PC-9 (cell line): ENCODE measurements at regions of chr17 and their contacts with region 1.

Region 1: DNA sequence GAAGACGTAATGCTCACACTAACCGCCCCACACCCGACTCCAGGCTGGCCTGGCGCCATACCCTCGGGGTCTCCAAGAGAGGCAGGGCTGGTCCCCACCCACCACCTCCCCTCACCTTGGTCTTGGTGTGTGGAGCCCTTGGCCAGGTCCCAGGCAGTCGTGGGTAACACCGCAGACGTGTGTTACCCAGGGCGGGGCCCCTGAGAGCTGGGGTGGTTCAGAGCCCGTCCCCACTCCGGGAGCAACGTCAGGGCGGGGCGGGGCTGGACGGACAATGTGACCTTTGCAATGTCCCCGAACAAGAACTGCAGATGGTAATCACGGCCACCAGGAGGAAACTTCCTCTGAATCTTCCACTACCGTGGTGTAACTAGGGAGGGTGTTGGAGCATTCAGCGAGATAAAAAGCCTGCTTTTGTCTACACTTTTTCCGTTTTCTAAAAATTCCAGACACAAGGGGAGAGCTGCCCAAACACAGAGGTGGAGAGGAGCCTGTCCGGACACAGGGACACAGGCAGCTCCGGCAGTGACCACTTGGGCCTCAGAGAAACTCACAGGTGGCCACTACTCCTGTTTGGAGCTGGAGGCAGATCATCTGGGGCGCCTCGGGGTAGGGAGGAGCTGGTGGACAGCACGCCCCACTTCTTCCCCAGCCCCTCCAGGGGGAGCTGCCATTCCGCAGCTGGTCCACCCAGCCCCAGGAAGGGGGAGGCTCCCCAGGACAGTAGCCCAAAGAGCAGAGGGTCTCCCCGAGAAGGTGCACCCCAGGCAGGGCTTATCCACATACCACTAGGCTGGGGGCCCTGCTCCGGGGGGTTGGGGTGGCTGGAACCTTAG is 14.2 kb upstream of the SLC38A10 start:
- DNase-seq: peak; percentile 76 to 92
- H3K4me3 ChIP-seq: peak overlapping the region; percentile 39; the same call in 1 of the 2 replicates
- H3K27ac ChIP-seq: peak overlapping the region; percentile 38; the same call in 1 of the 2 replicates
- H3K4me1 ChIP-seq: peaks cover 11% of the 10 kb centered on the region
- H3K27me3 ChIP-seq: no peaks in the 10 kb centered on the region
- CTCF ChIP-seq: peak; percentile 66

Region 2: GRCh38 chr17:81119223-81120148 is 189.8 kb before region 1 on chr17:
- CTCF ChIA-PET with region 1: no interaction called
- POLR2A ChIA-PET with region 1: no interaction called
- intact Hi-C with region 1: no loop called
- DNase-seq: peak; percentile 63 to 75
- H3K4me3 ChIP-seq: no peak overlapping the region
- H3K27ac ChIP-seq: no peak overlapping the region
- H3K4me1 ChIP-seq: no peaks in the 10 kb centered on the region
- H3K27me3 ChIP-seq: no peaks in the 10 kb centered on the region
- CTCF ChIP-seq: no peak

Region 3: DNA sequence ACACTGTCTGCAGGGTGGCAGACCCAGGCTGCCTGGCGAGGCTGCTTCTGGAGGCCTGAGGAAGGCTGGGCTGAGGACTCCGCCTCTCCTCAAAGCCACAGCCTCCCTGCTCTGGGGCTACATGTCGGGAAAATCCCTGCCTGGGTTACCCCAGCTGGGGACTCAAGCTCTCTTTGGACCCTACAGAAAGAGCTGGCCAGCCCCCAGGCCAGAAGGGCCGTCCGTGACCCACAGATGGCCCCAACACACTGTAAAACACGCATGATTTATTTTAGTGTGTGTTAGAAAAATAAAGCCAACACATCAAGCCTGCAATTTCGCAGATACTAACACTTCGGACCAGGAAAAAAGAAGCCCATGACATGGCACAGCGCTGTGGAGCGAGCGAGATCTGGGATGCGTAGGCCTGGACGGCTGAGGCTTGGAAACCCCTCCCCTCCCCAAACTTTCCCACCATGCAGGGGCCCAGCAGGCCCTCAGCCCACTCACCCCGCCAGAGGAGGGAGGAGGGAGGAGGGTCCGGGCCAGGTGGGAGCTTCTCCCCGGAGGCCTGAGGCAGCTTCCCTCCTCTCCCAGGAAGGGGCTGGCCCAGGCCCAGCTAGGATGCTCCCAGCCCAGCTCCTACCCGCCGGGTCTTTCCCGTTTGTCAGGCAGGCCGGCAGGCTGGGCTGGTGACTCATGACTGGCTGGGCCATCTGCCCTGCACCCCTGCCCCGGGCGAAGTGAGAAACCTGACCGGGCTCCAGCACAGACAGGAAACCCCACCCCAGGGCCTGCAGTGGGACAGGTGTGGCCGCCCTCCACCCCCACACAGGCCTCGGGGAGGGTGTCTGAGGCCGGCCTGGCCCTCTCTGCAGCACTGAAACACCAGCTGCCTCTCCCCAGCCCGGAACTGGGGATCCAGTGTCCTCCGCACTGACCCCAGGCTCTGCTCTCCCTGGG is 20.0 kb after region 1 on chr17:
- CTCF ChIA-PET with region 1: interaction called, 7 read pairs
- POLR2A ChIA-PET with region 1: interaction called, 6 read pairs
- intact Hi-C with region 1: loop called (anchors 1 kb)
- DNase-seq: peak; percentile 91 to 100
- H3K4me3 ChIP-seq: peak overlapping the region; percentile 57
- H3K27ac ChIP-seq: peak overlapping the region; percentile 90
- H3K4me1 ChIP-seq: peaks cover 54% of the 10 kb centered on the region
- H3K27me3 ChIP-seq: no peaks in the 10 kb centered on the region
- CTCF ChIP-seq: no peak

Region 4: DNA sequence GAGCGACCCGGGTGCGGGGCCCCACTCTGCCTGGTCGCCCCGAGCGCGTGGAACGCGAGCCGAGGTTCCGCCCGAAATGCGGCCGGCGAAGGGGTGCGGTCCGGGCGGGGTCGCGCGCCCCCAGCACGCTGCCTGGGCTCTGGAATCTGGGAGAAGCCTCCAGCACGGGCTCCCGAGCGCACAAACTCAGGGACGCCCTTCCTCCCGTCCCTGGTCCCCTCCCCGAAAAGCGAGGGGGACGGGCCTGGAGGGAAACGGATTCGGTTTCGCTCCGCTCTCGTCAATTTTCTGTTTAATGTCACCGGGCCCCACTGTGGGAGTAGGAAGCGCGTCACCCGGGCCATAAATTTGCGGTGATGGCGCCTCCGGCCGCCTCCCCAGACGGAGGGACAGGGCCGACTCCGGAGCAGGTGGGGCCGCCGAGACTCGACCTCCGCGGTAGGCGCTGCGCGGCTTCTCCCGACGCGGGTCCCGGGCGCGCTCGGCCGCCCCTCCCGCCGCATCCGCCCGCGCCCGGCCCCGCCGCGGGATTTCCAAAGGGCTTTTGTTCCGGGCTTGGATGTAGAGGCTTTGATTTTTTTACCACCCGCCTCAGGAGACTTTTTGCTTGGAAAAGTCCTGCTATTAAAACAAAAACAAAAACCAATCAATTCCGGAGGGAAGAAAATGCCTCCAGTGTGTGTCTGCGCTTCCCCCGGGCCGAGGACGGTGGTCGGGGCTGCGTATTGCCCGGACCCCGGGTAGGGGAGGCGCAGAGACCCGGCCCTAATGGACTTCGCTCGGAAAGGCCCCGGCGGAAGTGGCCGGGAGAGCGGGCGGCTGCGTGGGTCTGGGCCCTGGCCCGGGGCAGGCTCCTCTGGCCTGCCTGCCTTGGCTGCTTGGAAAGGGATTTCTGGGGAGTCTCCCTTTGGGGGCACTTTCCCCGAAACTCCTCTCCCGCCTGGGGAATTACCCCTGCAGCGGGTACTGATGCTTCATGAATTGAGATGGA is 78.1 kb after region 1 on chr17:
- CTCF ChIA-PET with region 1: no interaction called
- POLR2A ChIA-PET with region 1: no interaction called
- intact Hi-C with region 1: loop called (anchors 2 kb)
- DNase-seq: peak in 1 of 2 experiments; percentile 55
- H3K4me3 ChIP-seq: peak overlapping the region; percentile 66
- H3K27ac ChIP-seq: no peak overlapping the region
- H3K4me1 ChIP-seq: peaks cover 3% of the 10 kb centered on the region; the same call in 1 of the 2 replicates
- H3K27me3 ChIP-seq: no peaks in the 10 kb centered on the region
- CTCF ChIP-seq: no peak